Ovary (tissue), 10 donors: ENCODE measurements at regions of chr12 and their contacts with region 1.

Region 1: GRCh38 chr12:29545102-29545467 is 47.6 kb upstream of the OVCH1 start:
- DNase-seq: no peak
- H3K4me3 ChIP-seq: no peak overlapping the region
- H3K27ac ChIP-seq: no peak overlapping the region
- H3K4me1 ChIP-seq: peaks cover 5% of the 10 kb centered on the region
- H3K27me3 ChIP-seq: no peaks in the 10 kb centered on the region
- CTCF ChIP-seq: no peak
- EP300 ChIP-seq: no peak
- POLR2A ChIP-seq: no peak

Region 2: DNA sequence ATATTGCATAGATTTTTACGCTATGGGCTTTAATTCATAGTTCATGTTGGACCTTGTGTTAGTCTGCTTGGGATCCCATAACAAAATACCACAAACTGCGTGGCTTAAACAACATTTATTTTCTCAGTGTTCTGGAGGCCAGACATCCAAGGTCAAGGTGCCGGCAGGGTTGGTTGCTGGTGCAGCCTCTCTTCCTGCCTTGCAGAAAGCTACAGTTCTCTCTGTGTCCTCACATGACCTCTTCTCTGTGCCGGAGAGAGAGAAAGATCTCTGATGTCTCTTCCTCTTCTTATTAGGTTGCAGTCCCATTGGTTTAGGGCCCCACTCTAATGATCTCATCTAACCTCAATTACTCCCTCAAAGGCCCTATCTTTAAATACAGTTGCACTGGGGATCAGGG is 980.1 kb after region 1 on chr12:
- intact Hi-C with region 1: loop called in 1 of 4 experiments (anchors 5 kb)
- DNase-seq: peak in 4 of 5 donors; percentile 16 to 46 (median 24)
- H3K4me3 ChIP-seq: no peak overlapping the region
- H3K27ac ChIP-seq: no peak overlapping the region
- H3K4me1 ChIP-seq: peaks cover 2% of the 10 kb centered on the region
- H3K27me3 ChIP-seq: no peaks in the 10 kb centered on the region
- CTCF ChIP-seq: no peak
- EP300 ChIP-seq: no peak
- POLR2A ChIP-seq: no peak